Activated naive CD4-positive, alpha-beta T cell treated with anti-CD3 and anti-CD28 coated beads for 36 hours (primary cell): ENCODE measurements at regions of chr16 and their contacts with region 1.

Region 1: GRCh38 chr16:78002915-78003538 is 19.3 kb upstream of the CLEC3A start:
- DNase-seq: peak; percentile 89
- H3K4me3 Mint-ChIP-seq: no peak overlapping the region
- H3K27ac Mint-ChIP-seq: no peak overlapping the region
- H3K4me1 Mint-ChIP-seq: no peaks in the 10 kb centered on the region
- H3K27me3 Mint-ChIP-seq: peaks cover 9% of the 10 kb centered on the region

Region 2: DNA sequence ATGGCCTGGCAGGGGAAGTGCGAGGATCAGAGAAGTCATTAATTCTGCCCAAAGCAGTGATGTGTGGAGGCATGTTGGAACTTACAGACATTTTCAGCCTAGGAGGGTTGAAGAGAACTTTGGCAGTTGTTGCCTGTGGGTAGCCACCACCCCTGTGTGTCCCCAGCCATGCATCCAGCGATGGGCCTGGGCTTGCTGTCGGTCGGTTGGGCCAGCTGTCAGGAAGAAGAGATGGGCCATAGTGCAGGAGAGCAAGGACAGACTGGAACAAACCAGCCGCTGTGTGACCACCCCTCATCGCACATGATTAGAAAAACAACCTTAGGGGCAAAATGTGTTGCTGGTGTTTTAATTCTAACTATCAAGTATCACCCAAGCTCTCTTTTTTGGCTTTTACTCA is 1552.1 kb before region 1 on chr16:
- CTCF ChIA-PET with region 1: no interaction called
- intact Hi-C with region 1: no loop called
- DNase-seq: no peak
- H3K4me3 Mint-ChIP-seq: no peak overlapping the region
- H3K27ac Mint-ChIP-seq: no peak overlapping the region
- H3K4me1 Mint-ChIP-seq: no peaks in the 10 kb centered on the region
- H3K27me3 Mint-ChIP-seq: no peaks in the 10 kb centered on the region

Region 3: DNA sequence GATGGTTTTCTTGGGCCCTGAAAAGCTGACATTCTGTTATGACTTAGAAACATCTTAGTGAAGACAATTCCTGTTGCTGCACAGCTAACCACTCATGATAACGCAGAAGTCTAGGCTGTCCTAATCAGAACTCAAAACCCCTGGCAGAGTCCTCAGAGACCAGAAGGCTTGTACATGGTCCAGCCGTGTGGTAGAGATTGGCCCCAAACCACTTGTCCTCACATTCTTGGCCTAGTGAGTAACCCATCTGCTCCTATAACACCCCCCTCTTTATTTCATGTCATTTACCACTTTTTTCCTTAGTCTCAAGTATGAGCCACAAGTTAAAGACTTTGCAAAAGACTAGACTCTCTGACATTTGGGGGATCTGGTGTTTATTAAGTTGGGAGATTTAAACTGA is 451.7 kb before region 1 on chr16:
- CTCF ChIA-PET with region 1: no interaction called
- intact Hi-C with region 1: no loop called
- DNase-seq: no peak
- H3K4me3 Mint-ChIP-seq: no peak overlapping the region
- H3K27ac Mint-ChIP-seq: no peak overlapping the region
- H3K4me1 Mint-ChIP-seq: peaks cover 2% of the 10 kb centered on the region
- H3K27me3 Mint-ChIP-seq: peaks cover 29% of the 10 kb centered on the region

Region 4: DNA sequence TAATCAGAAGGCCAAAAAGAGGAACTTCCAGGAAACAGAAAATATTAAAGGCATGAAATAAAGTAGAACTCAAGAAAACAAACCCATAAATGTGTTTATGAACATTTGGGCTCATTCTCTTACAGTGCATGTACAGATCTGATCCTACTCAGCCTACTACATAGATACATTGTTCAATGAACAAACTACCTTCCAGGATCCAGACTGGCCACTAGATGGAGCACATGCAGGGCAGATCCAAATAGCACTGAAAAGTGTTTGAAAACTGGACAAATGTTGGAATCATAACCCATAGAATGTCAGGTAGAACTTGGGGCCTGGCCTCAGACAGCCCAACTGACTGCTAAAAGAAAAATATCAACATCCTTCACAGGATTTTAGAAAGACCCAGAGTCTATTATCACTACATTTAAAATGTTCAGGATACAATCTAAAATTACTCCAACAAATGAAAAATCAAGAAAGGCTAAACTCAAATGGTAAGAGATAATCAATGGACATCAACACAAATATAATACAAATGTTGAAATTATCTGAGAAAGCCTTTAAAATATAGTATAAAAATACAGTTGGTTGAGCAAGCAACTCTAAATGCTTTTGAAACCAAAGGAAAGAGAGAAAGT is 403.1 kb before region 1 on chr16:
- CTCF ChIA-PET with region 1: no interaction called
- intact Hi-C with region 1: loop called (anchors 1 kb)
- DNase-seq: peak; percentile 46
- H3K4me3 Mint-ChIP-seq: no peak overlapping the region
- H3K27ac Mint-ChIP-seq: no peak overlapping the region
- H3K4me1 Mint-ChIP-seq: no peaks in the 10 kb centered on the region
- H3K27me3 Mint-ChIP-seq: peaks cover 18% of the 10 kb centered on the region

Region 5: GRCh38 chr16:77647726-77648125 is 355.3 kb before region 1 on chr16:
- CTCF ChIA-PET with region 1: no interaction called
- intact Hi-C with region 1: no loop called
- DNase-seq: no peak
- H3K4me3 Mint-ChIP-seq: no peak overlapping the region
- H3K27ac Mint-ChIP-seq: no peak overlapping the region
- H3K4me1 Mint-ChIP-seq: no peaks in the 10 kb centered on the region
- H3K27me3 Mint-ChIP-seq: peaks cover 8% of the 10 kb centered on the region

Region 6: GRCh38 chr16:77675464-77676324 is 327.3 kb before region 1 on chr16:
- CTCF ChIA-PET with region 1: interaction called, 10 read pairs
- intact Hi-C with region 1: loop called (anchors 1 kb)
- DNase-seq: peak; percentile 79
- H3K4me3 Mint-ChIP-seq: no peak overlapping the region
- H3K27ac Mint-ChIP-seq: no peak overlapping the region
- H3K4me1 Mint-ChIP-seq: no peaks in the 10 kb centered on the region
- H3K27me3 Mint-ChIP-seq: peaks cover 4% of the 10 kb centered on the region

Region 7: GRCh38 chr16:77931058-77931457 is 72.0 kb before region 1 on chr16:
- CTCF ChIA-PET with region 1: no interaction called
- intact Hi-C with region 1: no loop called
- DNase-seq: no peak
- H3K4me3 Mint-ChIP-seq: no peak overlapping the region
- H3K27ac Mint-ChIP-seq: no peak overlapping the region
- H3K4me1 Mint-ChIP-seq: no peaks in the 10 kb centered on the region
- H3K27me3 Mint-ChIP-seq: peaks cover 4% of the 10 kb centered on the region

Region 8: GRCh38 chr16:77951775-77952174 is 51.3 kb before region 1 on chr16:
- CTCF ChIA-PET with region 1: no interaction called
- intact Hi-C with region 1: loop called (anchors 5 kb)
- DNase-seq: no peak
- H3K4me3 Mint-ChIP-seq: no peak overlapping the region
- H3K27ac Mint-ChIP-seq: no peak overlapping the region
- H3K4me1 Mint-ChIP-seq: no peaks in the 10 kb centered on the region
- H3K27me3 Mint-ChIP-seq: peaks cover 19% of the 10 kb centered on the region

Region 9: GRCh38 chr16:77971306-77972271 is 31.4 kb before region 1 on chr16:
- CTCF ChIA-PET with region 1: interaction called, 24 read pairs
- intact Hi-C with region 1: loop called (anchors 1 kb)
- DNase-seq: peak; percentile 85
- H3K4me3 Mint-ChIP-seq: no peak overlapping the region
- H3K27ac Mint-ChIP-seq: no peak overlapping the region
- H3K4me1 Mint-ChIP-seq: peaks cover 3% of the 10 kb centered on the region
- H3K27me3 Mint-ChIP-seq: peaks cover 14% of the 10 kb centered on the region

Region 10: GRCh38 chr16:78099372-78100161 is 96.5 kb after region 1 on chr16 and contains the start of gene WWOX:
- CTCF ChIA-PET with region 1: interaction called, 4 read pairs
- intact Hi-C with region 1: loop called (anchors 1 kb)
- DNase-seq: peak; percentile 95
- H3K4me3 Mint-ChIP-seq: peak within 1 kb of the TSS; percentile 84
- H3K27ac Mint-ChIP-seq: peak within 1 kb of the TSS; percentile 88
- H3K4me1 Mint-ChIP-seq: peaks cover 24% of the 10 kb centered on the region
- H3K27me3 Mint-ChIP-seq: peaks cover 3% of the 10 kb centered on the region
- total RNA-seq, gene WWOX: 20.2 to 21.4 TPM